Heart right ventricle (tissue), 16 donors: ENCODE measurements at regions of chr11 and their contacts with region 1.

Region 1: DNA sequence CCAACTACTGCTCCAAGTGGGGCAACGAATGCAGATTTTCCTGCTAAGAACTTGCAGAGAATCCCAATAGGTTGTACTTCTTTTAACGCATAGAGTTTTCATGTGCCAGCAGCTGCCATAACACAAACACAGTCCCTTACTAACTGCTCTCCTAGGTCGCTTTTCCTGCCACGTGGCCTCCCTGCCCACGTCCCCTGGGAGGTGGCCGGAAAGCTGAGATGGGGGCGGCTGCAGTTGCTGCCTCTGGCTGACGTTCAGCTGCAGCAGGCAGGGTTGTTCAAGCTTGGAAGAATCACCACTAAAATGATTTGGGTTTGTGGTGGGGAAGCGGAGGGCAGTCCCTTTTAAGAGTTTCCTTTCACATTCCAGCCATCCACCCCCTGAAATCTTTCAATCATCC is 39.3 kb downstream of the ZNF202 start:
- DNase-seq: peak; percentile 6 to 17
- ATAC-seq: peak in 4 of 8 donors; percentile 44 to 62 (median 56)
- H3K4me3 ChIP-seq: no peak overlapping the region
- H3K27ac ChIP-seq: no peak overlapping the region
- H3K4me1 ChIP-seq: peaks cover 0 to 11% (median 4%) of the 10 kb centered on the region in 9 donors
- H3K27me3 ChIP-seq: peaks cover 0 to 7% (median 0%) of the 10 kb centered on the region in 7 donors
- CTCF ChIP-seq: no peak

Region 2: GRCh38 chr11:123654566-123655081 is 47.5 kb before region 1 on chr11 and contains the start of gene SCN3B:
- intact Hi-C with region 1: loop called in 2 of 10 experiments (anchors 5 kb)
- DNase-seq: peak; percentile 66 to 73
- ATAC-seq: peak; percentile 95 to 98 (median 97)
- H3K4me3 ChIP-seq: peak within 1 kb of the TSS; percentile 45 to 78 (median 72)
- H3K27ac ChIP-seq: peak within 1 kb of the TSS in 9 of 10 donors; percentile 32 to 87 (median 76)
- H3K4me1 ChIP-seq: peaks cover 4 to 33% (median 21%) of the 10 kb centered on the region in 9 donors
- H3K27me3 ChIP-seq: peaks cover 0 to 66% (median 0%) of the 10 kb centered on the region in 7 donors
- CTCF ChIP-seq: no peak
- total RNA-seq, gene SCN3B: 0.26 to 3.4 (median 1.7) TPM